Vagina (tissue), 2 donors: ENCODE measurements at regions of chrX and their contacts with region 1.

Region 1: DNA sequence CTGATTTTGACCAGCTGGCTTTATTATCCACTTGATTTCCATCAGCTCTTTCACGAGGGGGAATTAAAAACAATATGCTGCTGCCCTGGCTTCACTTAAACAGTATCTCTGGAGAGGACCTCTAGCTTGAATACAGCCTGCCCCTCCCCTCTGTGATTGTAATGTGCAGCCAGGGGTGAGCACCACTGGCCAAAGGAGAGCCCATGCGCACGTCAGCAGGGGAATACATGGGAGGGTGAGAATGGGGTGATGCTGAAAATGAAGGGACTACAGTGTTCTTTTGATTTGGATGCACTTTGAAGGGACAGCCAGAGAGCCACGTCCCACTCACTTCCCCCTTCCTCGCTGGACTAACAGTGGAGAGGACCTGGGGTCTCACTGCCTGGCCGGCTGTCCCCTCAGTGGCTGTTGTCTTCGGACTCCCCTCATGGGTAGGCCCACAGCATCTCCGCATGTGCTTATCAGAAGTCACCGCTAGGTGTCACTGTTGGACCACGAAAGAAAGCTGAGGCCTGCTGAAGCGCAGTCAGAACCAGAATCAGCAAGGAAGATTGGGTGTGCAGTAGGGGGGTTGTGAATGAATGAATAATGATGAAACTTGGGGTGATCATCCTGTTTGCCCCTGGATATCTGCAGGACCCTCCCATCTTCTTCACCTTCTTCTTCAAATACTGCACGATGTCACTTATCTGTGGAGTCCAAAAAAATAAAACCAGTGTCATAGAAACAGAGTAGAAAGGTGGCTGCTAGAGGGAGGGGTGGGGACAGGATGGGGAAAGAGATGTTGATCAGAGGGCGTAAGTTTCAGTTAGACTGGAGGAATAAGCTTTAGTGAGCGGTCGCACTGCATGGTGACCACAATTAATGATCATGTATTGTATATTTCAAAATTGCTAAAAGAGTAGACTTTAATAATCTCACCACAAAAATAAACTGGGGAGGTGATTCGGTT is 32.8 kb downstream of the CLCN4 start:
- DNase-seq: no peak
- H3K4me3 ChIP-seq: no peak overlapping the region
- H3K27ac ChIP-seq: no peak overlapping the region
- H3K4me1 ChIP-seq: no peaks in the 10 kb centered on the region
- H3K27me3 ChIP-seq: no peaks in the 10 kb centered on the region
- CTCF ChIP-seq: peak; percentile 66 to 75 (median 73)
- POLR2A ChIP-seq: no peak

Region 2: GRCh38 chrX:10636337-10636736 is 446.7 kb after region 1 on chrX:
- intact Hi-C with region 1: loop called (anchors 10 kb)
- DNase-seq: no peak
- H3K4me3 ChIP-seq: no peak overlapping the region
- H3K27ac ChIP-seq: peak overlapping the region; percentile 36
- H3K4me1 ChIP-seq: peaks cover 6% of the 10 kb centered on the region
- H3K27me3 ChIP-seq: no peaks in the 10 kb centered on the region
- CTCF ChIP-seq: peak in 1 of 3 experiments; percentile 30
- POLR2A ChIP-seq: no peak

Region 3: GRCh38 chrX:10722851-10723250 is 533.3 kb after region 1 on chrX:
- intact Hi-C with region 1: loop called (anchors 10 kb)
- DNase-seq: no peak
- H3K4me3 ChIP-seq: no peak overlapping the region
- H3K27ac ChIP-seq: no peak overlapping the region
- H3K4me1 ChIP-seq: no peaks in the 10 kb centered on the region
- H3K27me3 ChIP-seq: no peaks in the 10 kb centered on the region
- CTCF ChIP-seq: peak; percentile 39 to 60 (median 50)
- POLR2A ChIP-seq: no peak